ENCODE measurements at regions of chr5 and their contacts with region 1.

Region 1: GRCh38 chr5:120457839-120458507 is 6.1 kb upstream of the PRR16 start:
- DNase-seq: peak; percentile 57
- H3K4me3 ChIP-seq: no peak overlapping the region
- H3K27ac ChIP-seq: no peak overlapping the region
- H3K4me1 ChIP-seq: no peaks in the 10 kb centered on the region
- H3K27me3 ChIP-seq: peaks cover 3% of the 10 kb centered on the region
- CTCF ChIP-seq: peak; percentile 71

Region 2: GRCh38 chr5:119470851-119471451 is 987.0 kb before region 1 on chr5:
- CTCF ChIA-PET with region 1: no interaction called
- POLR2A ChIA-PET with region 1: no interaction called
- intact Hi-C with region 1: loop called (anchors 2 kb)
- DNase-seq: peak; percentile 56
- H3K4me3 ChIP-seq: no peak overlapping the region
- H3K27ac ChIP-seq: no peak overlapping the region
- H3K4me1 ChIP-seq: peaks cover 4% of the 10 kb centered on the region
- H3K27me3 ChIP-seq: no peaks in the 10 kb centered on the region
- CTCF ChIP-seq: peak; percentile 82

Region 3: DNA sequence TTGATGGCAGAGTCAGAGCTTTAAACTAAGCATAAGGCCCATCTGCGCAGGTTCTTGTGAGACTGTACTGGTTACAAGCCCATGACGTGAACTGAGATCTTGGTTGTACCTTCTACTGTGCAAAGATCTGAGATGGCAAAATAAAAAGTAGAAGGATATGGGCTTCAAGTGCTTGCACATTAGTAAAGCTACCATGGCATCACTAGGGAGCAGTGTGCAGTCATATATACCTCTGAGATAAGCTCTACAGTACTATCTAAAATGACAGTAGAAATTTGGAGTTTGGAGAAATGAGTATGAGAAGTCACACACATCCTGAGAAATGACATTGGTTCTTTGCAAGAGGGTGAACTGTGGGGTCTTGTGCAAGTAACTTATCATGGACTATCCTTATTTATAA is 402.1 kb before region 1 on chr5:
- CTCF ChIA-PET with region 1: no interaction called
- POLR2A ChIA-PET with region 1: no interaction called
- intact Hi-C with region 1: loop called (anchors 2 kb)
- DNase-seq: peak; percentile 11
- H3K4me3 ChIP-seq: no peak overlapping the region
- H3K27ac ChIP-seq: no peak overlapping the region
- H3K4me1 ChIP-seq: no peaks in the 10 kb centered on the region
- H3K27me3 ChIP-seq: no peaks in the 10 kb centered on the region
- CTCF ChIP-seq: no peak

Region 4: DNA sequence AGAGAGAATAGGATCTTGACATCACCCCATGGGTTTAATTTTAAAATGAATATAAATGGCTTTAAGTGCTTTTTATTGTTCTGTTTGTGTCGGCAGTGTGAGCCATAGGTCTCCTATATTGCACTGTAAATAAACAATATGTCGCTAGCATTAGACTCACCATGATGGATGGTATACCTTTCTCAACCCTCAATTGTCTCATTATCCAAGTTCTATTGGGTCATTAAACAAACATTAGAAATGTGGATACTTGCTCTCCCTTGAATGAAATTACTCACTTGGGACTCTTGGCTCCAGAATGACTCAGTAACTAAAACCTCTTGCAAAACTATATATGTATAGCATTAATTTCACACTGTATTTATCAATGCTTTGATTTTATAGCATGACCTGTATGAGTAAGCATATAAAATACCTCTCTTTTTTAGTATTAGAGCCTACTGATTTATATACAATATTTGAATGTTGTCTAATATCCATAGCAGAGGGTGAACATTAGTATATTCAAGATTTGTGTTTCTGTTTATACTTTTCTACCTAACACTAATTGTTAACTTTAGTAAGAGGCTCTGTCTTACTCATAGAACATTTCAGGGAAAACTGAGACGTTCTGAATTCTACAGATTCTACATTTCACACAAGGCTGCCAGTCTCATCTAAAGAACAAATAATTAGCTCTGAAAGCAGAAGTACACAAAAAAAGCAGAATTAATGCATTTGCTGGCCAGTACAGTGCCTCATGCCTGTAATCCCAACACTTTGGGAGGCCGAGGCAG is 297.7 kb before region 1 on chr5:
- CTCF ChIA-PET with region 1: no interaction called
- POLR2A ChIA-PET with region 1: no interaction called
- intact Hi-C with region 1: no loop called
- DNase-seq: peak; percentile 3
- H3K4me3 ChIP-seq: no peak overlapping the region
- H3K27ac ChIP-seq: no peak overlapping the region
- H3K4me1 ChIP-seq: no peaks in the 10 kb centered on the region
- H3K27me3 ChIP-seq: no peaks in the 10 kb centered on the region
- CTCF ChIP-seq: no peak

Region 5: DNA sequence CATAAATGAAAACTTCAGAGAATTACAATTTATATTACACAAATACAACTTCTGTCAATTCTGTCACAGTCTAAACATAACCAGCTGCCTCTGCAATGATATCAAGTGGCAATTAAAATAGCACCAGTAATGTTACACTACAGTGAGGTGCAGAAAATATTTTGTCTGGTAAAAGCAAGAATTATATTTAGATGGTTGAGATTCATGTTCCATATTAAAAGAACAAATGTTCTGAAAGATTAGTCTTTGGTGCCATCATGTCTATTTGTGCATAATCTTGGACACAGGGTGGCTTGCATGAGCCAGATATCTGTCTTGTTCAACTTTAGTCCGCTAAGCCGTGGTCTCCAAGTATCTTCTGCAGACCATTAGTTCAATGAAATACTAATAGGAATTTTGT is 22.8 kb before region 1 on chr5:
- CTCF ChIA-PET with region 1: no interaction called
- POLR2A ChIA-PET with region 1: no interaction called
- intact Hi-C with region 1: no loop called
- DNase-seq: no peak
- H3K4me3 ChIP-seq: no peak overlapping the region
- H3K27ac ChIP-seq: no peak overlapping the region
- H3K4me1 ChIP-seq: no peaks in the 10 kb centered on the region
- H3K27me3 ChIP-seq: no peaks in the 10 kb centered on the region
- CTCF ChIP-seq: no peak